AG04449 (cell line): ENCODE measurements at regions of chr1 and their contacts with region 1.

Region 1: GRCh38 chr1:234743791-234744611 is 134.0 kb upstream of the IRF2BP2 start:
- DNase-seq: no peak
- H3K4me3 ChIP-seq: peak overlapping the region; percentile 19; the same call in 1 of the 2 replicates
- CTCF ChIP-seq: no peak

Region 2: DNA sequence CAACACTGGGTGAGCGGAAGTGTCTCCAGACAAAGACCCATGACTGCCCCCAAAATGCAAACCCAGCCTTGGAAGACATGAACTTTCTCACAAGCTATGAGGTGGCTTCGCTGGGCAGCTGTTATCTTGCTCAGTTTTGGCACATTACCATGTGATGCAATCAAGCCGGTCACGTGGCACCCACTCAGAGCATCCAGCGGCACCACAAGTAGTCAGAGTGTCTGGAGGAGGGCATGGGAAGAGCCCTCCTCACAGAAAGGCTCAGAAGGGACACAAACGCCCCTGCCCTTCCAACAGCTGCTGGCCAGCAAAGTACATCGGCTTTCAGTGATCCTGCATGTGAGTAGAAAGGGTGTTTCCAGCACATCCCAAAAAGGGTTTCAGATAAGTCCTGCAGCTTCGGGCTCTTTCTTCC is 11.5 kb after region 1 on chr1:
- CTCF ChIA-PET with region 1: interaction called, 12 read pairs
- POLR2A ChIA-PET with region 1: no interaction called
- DNase-seq: peak; percentile 44
- H3K4me3 ChIP-seq: no peak overlapping the region
- CTCF ChIP-seq: no peak

Region 3: GRCh38 chr1:234978397-234979295 is 234.6 kb after region 1 on chr1:
- CTCF ChIA-PET with region 1: no interaction called
- POLR2A ChIA-PET with region 1: no interaction called
- DNase-seq: no peak
- H3K4me3 ChIP-seq: no peak overlapping the region
- CTCF ChIP-seq: no peak